Activated naive CD4-positive, alpha-beta T cell treated with anti-CD3 and anti-CD28 coated beads for 36 hours (primary cell): ENCODE measurements at regions of chr7 and their contacts with region 1.

Region 1: DNA sequence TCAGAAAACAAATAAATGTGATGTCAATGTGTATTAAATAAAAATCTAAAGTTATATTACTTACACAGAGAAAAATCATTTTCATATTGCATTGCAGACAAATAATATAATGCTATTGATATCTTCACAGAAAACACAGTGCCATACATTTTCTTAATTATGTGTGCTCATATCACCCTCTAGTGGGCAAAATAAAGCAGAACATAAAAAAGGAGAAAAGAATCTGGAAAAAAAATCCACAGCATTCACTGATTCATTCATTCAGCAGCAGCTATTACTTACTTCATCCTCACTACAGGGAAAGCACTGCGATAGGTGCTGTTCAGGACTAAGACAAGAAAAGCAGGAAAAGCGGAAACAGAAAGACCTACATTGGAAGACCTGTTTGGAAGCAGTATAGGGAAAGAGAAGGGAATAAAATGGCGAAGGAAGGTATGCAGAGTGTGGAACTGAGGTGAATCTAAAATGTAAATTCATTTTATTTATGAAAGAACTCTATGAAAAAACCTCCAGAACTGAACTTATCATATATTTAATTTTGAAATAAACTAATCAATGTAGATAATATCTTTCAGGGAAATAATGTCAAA is 73.2 kb downstream of the POT1 start:
- DNase-seq: no peak
- H3K4me3 Mint-ChIP-seq: no peak overlapping the region
- H3K27ac Mint-ChIP-seq: no peak overlapping the region
- H3K4me1 Mint-ChIP-seq: no peaks in the 10 kb centered on the region
- H3K27me3 Mint-ChIP-seq: no peaks in the 10 kb centered on the region

Region 2: GRCh38 chr7:124779194-124779593 is 77.2 kb before region 1 on chr7:
- CTCF ChIA-PET with region 1: no interaction called
- intact Hi-C with region 1: no loop called
- DNase-seq: no peak
- H3K4me3 Mint-ChIP-seq: no peak overlapping the region
- H3K27ac Mint-ChIP-seq: no peak overlapping the region
- H3K4me1 Mint-ChIP-seq: no peaks in the 10 kb centered on the region
- H3K27me3 Mint-ChIP-seq: peaks cover 13% of the 10 kb centered on the region

Region 3: DNA sequence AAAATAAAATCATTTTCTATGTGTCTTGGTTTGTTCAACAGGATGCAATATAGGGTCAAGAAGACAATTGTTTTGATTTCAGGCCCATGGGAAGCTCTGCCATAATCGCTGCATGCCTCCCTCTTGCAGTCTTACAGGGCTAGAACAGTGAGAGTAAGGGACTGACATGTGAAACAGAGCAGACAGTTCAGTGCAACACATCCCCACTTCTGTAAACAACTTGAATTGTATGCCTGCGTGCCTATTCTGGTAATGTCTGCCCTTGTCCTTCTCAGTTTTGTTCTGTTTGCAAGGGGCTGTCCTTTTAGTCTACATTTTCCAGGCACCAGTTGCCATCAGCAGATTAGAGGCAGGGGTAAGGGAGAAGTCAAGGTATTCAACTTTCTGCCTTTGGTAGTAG is 56.0 kb before region 1 on chr7:
- CTCF ChIA-PET with region 1: no interaction called
- intact Hi-C with region 1: no loop called
- DNase-seq: no peak
- H3K4me3 Mint-ChIP-seq: no peak overlapping the region
- H3K27ac Mint-ChIP-seq: no peak overlapping the region
- H3K4me1 Mint-ChIP-seq: no peaks in the 10 kb centered on the region
- H3K27me3 Mint-ChIP-seq: peaks cover 31% of the 10 kb centered on the region

Region 4: GRCh38 chr7:124914298-124914697 is 57.9 kb after region 1 on chr7:
- CTCF ChIA-PET with region 1: no interaction called
- intact Hi-C with region 1: loop called (anchors 5 kb)
- DNase-seq: no peak
- H3K4me3 Mint-ChIP-seq: no peak overlapping the region
- H3K27ac Mint-ChIP-seq: no peak overlapping the region
- H3K4me1 Mint-ChIP-seq: peaks cover 10% of the 10 kb centered on the region
- H3K27me3 Mint-ChIP-seq: no peaks in the 10 kb centered on the region

Region 5: GRCh38 chr7:125253452-125254182 is 397.2 kb after region 1 on chr7:
- CTCF ChIA-PET with region 1: no interaction called
- intact Hi-C with region 1: no loop called
- DNase-seq: no peak
- H3K4me3 Mint-ChIP-seq: no peak overlapping the region
- H3K27ac Mint-ChIP-seq: no peak overlapping the region
- H3K4me1 Mint-ChIP-seq: no peaks in the 10 kb centered on the region
- H3K27me3 Mint-ChIP-seq: no peaks in the 10 kb centered on the region